ENCODE measurements at regions of chr12 and their contacts with region 1.

Region 1: GRCh38 chr12:14239350-14239934 is 126.0 kb upstream of the ATF7IP start:
- DNase-seq: peak; percentile 50
- ATAC-seq: peak; percentile 59
- H3K4me3 Mint-ChIP-seq: peak overlapping the region; percentile 66
- H3K27ac Mint-ChIP-seq: peak overlapping the region; percentile 78
- H3K4me1 Mint-ChIP-seq: peaks cover 22% of the 10 kb centered on the region
- H3K27me3 Mint-ChIP-seq: no peaks in the 10 kb centered on the region

Region 2: GRCh38 chr12:14153803-14154202 is 85.6 kb before region 1 on chr12:
- CTCF ChIA-PET with region 1: no interaction called
- DNase-seq: no peak
- ATAC-seq: no peak
- H3K4me3 Mint-ChIP-seq: no peak overlapping the region
- H3K27ac Mint-ChIP-seq: no peak overlapping the region
- H3K4me1 Mint-ChIP-seq: no peaks in the 10 kb centered on the region
- H3K27me3 Mint-ChIP-seq: no peaks in the 10 kb centered on the region

Region 3: GRCh38 chr12:14417715-14418114 is 178.3 kb after region 1 on chr12:
- CTCF ChIA-PET with region 1: interaction called, 17 read pairs
- DNase-seq: peak; percentile 92
- ATAC-seq: peak; percentile 62
- H3K4me3 Mint-ChIP-seq: peak overlapping the region; percentile 69
- H3K27ac Mint-ChIP-seq: peak overlapping the region; percentile 93
- H3K4me1 Mint-ChIP-seq: peaks cover 57% of the 10 kb centered on the region
- H3K27me3 Mint-ChIP-seq: no peaks in the 10 kb centered on the region

Region 4: GRCh38 chr12:14664510-14664909 is 425.1 kb after region 1 on chr12:
- CTCF ChIA-PET with region 1: interaction called, 20 read pairs
- DNase-seq: no peak
- ATAC-seq: peak; percentile 51
- H3K4me3 Mint-ChIP-seq: no peak overlapping the region
- H3K27ac Mint-ChIP-seq: no peak overlapping the region
- H3K4me1 Mint-ChIP-seq: peaks cover 11% of the 10 kb centered on the region
- H3K27me3 Mint-ChIP-seq: peaks cover 7% of the 10 kb centered on the region